ENCODE measurements at regions of chr5 and their contacts with region 1.

Region 1: DNA sequence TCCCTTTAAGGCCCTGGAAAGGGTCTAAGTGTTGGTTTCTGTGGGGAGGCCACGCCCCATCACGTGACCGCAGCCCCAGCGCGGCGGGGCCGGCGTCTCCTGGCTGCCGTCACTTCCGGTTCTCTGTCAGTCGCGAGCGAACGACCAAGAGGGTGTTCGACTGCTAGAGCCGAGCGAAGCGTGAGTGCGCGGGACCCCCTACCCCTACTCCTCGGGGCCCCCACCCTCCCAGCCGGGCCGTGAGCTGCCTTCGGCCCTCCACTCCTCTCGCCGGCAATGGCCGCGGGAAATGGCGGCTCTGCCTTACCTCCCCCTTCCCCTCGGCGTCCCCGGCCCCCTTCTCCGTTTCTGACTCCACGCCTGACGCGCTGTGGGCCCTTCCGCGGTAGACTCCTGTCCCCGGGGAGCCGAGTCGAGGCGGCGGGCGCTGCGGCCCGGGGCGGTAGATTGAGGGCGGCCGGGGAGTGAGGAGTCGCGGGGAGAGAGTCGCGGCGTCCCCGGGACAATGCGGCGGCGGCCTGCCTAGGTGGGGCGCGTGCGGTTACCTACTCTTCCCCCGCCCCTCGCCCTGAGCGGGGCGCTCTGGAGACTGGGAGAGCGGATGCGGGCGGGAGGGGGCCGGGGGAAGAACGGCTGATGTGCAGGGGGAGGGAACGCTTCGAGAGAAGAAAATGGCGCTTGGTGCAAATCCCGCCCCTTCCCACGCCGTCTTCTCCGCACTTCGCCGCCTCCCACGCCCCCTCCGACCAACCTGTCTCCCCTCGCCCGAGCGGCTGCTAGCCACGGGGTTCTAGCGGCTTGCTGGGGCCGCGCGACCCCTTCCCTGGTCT is at the start of gene SUB1:
- DNase-seq: peak; percentile 62
- ATAC-seq: peak; percentile 66
- H3K4me3 ChIP-seq: peak within 1 kb of the TSS; percentile 81
- H3K27ac ChIP-seq: peak within 1 kb of the TSS; percentile 79
- H3K4me1 ChIP-seq: peaks cover 42% of the 10 kb centered on the region
- H3K27me3 ChIP-seq: no peaks in the 10 kb centered on the region
- CTCF ChIP-seq: no peak
- EP300 ChIP-seq: peak; percentile 46 to 47; a peak in 1 of 4 replicates
- POLR2A ChIP-seq: peak; percentile 94
- RAD21 ChIP-seq: peak; percentile 6; the same call in 1 of the 2 replicates
- polyA plus RNA-seq, gene SUB1: 1,885 to 2,316 TPM

Region 2: DNA sequence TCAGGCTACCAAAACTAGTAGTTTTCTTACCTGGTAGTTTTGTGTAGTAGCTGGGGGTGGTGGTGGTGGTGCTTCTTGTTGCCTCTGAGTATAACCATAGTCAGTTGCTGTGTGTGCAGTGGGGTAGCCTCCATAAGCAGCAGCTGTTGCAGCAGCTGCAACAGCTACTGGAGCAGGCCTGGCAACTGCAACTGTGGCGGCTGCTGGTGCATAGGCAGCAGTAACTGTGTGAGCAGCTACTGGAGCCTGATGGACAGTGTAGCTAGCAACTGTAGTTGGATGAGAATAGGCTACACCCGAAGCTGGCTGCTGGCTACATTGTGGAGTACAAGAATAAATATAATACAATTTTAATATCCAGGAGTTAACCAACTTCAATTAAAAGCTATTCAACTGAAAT is 165.9 kb before region 1 on chr5:
- CTCF ChIA-PET with region 1: interaction called, 10 read pairs
- POLR2A ChIA-PET with region 1: no interaction called
- RAD21 ChIA-PET with region 1: interaction called, 3 read pairs
- SMC1A ChIA-PET with region 1: interaction called, 9 read pairs
- in situ Hi-C with region 1: no loop called
- intact Hi-C with region 1: no loop called
- DNase-seq: no peak
- ATAC-seq: no peak
- H3K4me3 ChIP-seq: no peak overlapping the region
- H3K27ac ChIP-seq: no peak overlapping the region
- H3K4me1 ChIP-seq: no peaks in the 10 kb centered on the region
- H3K27me3 ChIP-seq: no peaks in the 10 kb centered on the region
- CTCF ChIP-seq: no peak
- EP300 ChIP-seq: no peak
- POLR2A ChIP-seq: no peak
- RAD21 ChIP-seq: no peak

Region 3: GRCh38 chr5:32498484-32498883 is 87.2 kb before region 1 on chr5:
- CTCF ChIA-PET with region 1: interaction called, 61 read pairs
- POLR2A ChIA-PET with region 1: no interaction called
- RAD21 ChIA-PET with region 1: interaction called, 21 read pairs
- SMC1A ChIA-PET with region 1: interaction called, 36 read pairs
- in situ Hi-C with region 1: no loop called
- intact Hi-C with region 1: no loop called
- DNase-seq: no peak
- ATAC-seq: no peak
- H3K4me3 ChIP-seq: no peak overlapping the region
- H3K27ac ChIP-seq: no peak overlapping the region
- H3K4me1 ChIP-seq: no peaks in the 10 kb centered on the region
- H3K27me3 ChIP-seq: no peaks in the 10 kb centered on the region
- CTCF ChIP-seq: no peak
- EP300 ChIP-seq: no peak
- POLR2A ChIP-seq: no peak
- RAD21 ChIP-seq: no peak

Region 4: GRCh38 chr5:32523625-32524024 is 62.0 kb before region 1 on chr5:
- CTCF ChIA-PET with region 1: interaction called, 134 read pairs
- POLR2A ChIA-PET with region 1: interaction called, 8 read pairs
- RAD21 ChIA-PET with region 1: interaction called, 25 read pairs
- SMC1A ChIA-PET with region 1: interaction called, 505 read pairs
- in situ Hi-C with region 1: no loop called
- intact Hi-C with region 1: no loop called
- DNase-seq: no peak
- ATAC-seq: peak; percentile 77
- H3K4me3 ChIP-seq: no peak overlapping the region
- H3K27ac ChIP-seq: no peak overlapping the region
- H3K4me1 ChIP-seq: no peaks in the 10 kb centered on the region
- H3K27me3 ChIP-seq: no peaks in the 10 kb centered on the region; a peak in 1 of 4 replicates
- CTCF ChIP-seq: 0 out of 6 replicates have a peak, but pooled peaks of 1 of the 3 experiments have one; percentile 10
- EP300 ChIP-seq: no peak
- POLR2A ChIP-seq: no peak
- RAD21 ChIP-seq: no peak

Region 5: GRCh38 chr5:32572778-32573480 is 12.7 kb before region 1 on chr5:
- CTCF ChIA-PET with region 1: interaction called, 38 read pairs
- POLR2A ChIA-PET with region 1: interaction called, 68 read pairs
- RAD21 ChIA-PET with region 1: interaction called, 94 read pairs
- SMC1A ChIA-PET with region 1: interaction called, 120 read pairs
- in situ Hi-C with region 1: no loop called
- intact Hi-C with region 1: loop called (anchors 1 kb)
- DNase-seq: peak; percentile 91
- ATAC-seq: peak; percentile 82
- H3K4me3 ChIP-seq: 0 out of 2 replicates have a peak overlapping the region, but pooled peaks have one; percentile 50
- H3K27ac ChIP-seq: peak overlapping the region; percentile 79
- H3K4me1 ChIP-seq: peaks cover 58% of the 10 kb centered on the region
- H3K27me3 ChIP-seq: no peaks in the 10 kb centered on the region
- CTCF ChIP-seq: no peak; a peak in 1 of 6 replicates
- EP300 ChIP-seq: peak; percentile 92 to 95
- POLR2A ChIP-seq: no peak
- RAD21 ChIP-seq: peak; percentile 34

Measured in GM12878 (cell line).